A549 (cell line): ENCODE measurements at regions of chr7 and their contacts with region 1.

Region 1: DNA sequence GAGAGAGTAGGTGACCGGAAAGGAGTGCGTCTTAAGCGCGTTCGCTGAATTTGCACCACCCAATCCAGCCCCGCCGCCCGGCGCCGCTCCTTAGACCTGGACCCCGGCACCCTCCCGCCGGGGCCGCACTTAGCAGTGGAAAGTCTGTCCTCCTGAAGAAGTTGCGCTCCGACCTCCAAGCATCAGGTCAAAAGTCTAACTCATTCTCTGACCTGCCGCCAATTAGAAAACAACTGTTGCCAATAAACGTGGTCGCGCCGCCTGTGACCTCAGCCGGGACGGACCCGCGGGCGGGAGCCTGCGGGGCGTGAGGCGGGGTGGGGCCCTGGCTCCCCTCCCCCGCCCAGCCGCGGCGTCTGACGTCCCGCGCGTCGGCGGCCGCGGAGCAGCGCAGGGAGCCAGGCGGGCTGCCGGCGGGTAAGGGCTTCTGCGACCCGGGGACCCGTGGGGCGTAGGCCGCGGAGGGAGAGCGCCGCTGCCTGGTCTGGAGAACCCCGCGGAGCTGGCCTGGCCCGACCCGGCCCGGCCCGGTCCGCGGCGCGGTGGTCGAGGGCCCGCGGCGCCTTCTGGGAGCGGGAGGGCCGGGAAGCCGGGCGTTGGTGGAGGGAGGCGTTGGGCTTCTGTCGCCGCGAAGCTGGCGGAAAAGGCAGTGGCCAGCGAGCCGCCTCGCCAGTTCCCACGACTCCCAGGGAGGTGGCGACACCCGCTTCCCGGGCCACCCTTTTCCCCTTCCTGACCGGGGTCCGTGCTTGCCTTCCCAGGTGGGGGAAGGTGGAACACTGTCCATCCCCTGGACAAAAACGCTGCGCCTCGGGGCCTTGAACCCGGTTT is at the start of gene BCAP29:
- DNase-seq: peak; percentile 64 to 74
- ATAC-seq: peak; percentile 96 to 98
- H3K4me3 ChIP-seq: peak within 1 kb of the TSS; percentile 71
- H3K27ac ChIP-seq: peak within 1 kb of the TSS; percentile 96 to 98
- H3K4me1 ChIP-seq: peaks cover 12% of the 10 kb centered on the region; the same call in 2 of the 3 replicates
- CTCF ChIP-seq: peak; percentile 27; the same call in 2 of the 3 replicates
- EP300 ChIP-seq: no peak
- POLR2A ChIP-seq: peak; percentile 75
- RAD21 ChIP-seq: no peak; a peak in 1 of 5 replicates
- polyA plus RNA-seq, gene BCAP29: 45.2 and 66.9 TPM in 2 replicates

Region 2: DNA sequence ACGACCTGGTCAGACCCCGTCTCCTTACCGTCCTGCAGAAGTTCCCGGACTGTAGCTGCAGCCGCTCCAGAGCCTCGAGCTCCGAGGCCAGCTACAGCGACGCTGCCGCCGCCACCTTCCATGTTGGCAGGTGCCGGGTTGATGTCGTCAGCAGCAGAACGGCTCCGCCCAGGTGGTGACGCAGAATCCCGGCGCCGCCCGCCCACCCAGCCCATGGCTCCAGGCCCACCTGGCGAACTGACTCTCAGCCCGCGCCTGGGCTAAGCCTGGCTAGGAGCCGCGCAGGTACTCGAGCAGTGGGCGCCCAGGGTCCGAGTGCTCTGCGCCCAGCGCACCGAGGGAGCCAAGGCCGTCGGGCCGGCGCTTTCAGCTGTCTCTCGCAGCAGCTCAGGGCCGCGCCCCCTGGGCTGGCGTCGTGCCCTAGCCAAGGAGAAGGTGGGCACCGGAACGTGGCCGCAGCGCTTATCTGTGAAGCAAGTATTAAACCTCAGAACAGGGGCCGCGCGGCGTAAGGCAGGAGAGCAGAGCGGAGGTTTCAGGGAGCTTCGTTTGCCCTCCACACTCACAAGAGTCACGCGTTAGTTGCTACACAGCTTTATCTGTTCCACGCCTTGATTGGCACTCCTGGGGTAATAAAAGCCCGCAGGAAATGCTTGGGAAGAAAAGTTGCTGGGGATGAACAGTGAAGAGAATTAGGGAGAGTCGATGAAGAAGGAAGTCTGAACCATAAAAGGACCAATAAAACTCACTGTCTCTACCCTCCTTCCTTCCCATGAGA is 16.1 kb before region 1 on chr7 and contains the starts of genes COG5 and DUS4L:
- CTCF ChIA-PET with region 1: no interaction called
- POLR2A ChIA-PET with region 1: interaction called, 16 read pairs
- DNase-seq: peak; percentile 66 to 80
- ATAC-seq: peak; percentile 93 to 97
- H3K4me3 ChIP-seq: peak within 1 kb of the TSS; percentile 77
- H3K27ac ChIP-seq: peak within 1 kb of the TSS; percentile 90 to 92
- H3K4me1 ChIP-seq: peaks cover 29% of the 10 kb centered on the region
- CTCF ChIP-seq: no peak
- EP300 ChIP-seq: no peak
- POLR2A ChIP-seq: peak; percentile 92
- RAD21 ChIP-seq: no peak
- polyA plus RNA-seq, gene COG5: 33.9 and 44.0 TPM in 2 replicates
- polyA plus RNA-seq, gene DUS4L: 13.6 and 17.4 TPM in 2 replicates